H1 (cell line): ENCODE measurements at regions of chr1 and their contacts with region 1.

Region 1: DNA sequence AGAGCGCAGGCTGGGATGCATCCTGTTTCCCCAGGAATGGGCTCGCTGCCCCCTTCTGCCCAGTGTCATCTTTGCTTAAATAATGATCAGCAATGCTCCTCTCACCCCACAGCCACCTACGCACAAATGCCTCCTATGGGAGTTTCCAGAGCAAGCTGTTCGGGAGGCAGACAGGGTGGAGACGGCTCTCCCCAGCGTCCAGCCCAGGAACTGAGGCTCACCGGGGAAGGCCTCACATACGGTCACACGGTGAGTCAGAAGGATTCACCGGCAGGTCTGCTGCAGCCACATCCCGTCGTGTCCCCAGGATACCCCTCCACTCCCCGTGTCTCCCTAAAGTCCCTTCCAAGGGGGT is 40.3 kb upstream of the RUNX3 start:
- DNase-seq: peak in 1 of 2 experiments; percentile 23
- H3K4me3 ChIP-seq: no peak overlapping the region
- H3K27ac ChIP-seq: no peak overlapping the region
- H3K4me1 ChIP-seq: peaks cover 0 to 24% (median 11%) of the 10 kb centered on the region in 4 experiments; a peak in 6 of 7 replicates
- H3K27me3 ChIP-seq: no peaks in the 10 kb centered on the region; a peak in 1 of 7 replicates
- CTCF ChIP-seq: peak in 1 of 3 experiments; percentile 0; a peak in 1 of 4 replicates
- EP300 ChIP-seq: no peak
- POLR2A ChIP-seq: no peak
- RAD21 ChIP-seq: no peak; a peak in 1 of 4 replicates

Region 2: DNA sequence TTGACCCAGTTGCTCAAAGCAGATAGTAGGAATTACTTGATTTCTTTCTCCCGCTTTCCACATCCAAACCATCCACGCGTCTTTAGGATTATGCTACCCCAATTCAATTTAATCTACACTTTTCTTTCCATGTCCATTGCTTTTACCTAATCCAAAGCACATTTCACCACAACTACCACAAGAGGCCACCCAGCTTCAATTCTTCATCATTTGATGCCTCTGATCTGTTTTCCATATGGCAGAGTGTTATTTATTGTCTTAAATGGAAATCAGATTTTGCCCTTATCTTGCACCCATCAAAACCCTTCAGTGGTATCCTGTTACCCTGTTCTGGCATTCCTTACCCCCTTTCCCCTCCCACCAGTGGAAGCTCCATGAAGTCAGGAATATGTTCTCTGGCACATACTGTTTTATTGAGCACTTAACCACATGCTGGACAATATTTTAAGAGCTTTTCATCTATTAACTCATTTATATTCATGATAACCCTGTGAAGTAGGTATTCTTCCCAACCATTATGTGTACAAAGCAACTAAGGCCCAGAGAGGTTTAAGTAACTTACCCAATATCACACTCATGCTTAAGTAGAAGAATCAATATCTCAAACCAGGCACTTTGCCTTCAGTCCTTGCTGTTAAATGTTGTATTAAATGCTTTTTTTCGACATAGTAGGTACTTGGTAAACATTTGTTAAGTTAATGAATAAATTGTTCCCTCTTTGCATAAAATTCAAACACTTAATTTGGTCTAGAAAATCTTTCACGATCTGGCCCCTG is 190.5 kb before region 1 on chr1:
- CTCF ChIA-PET with region 1: no interaction called
- POLR2A ChIA-PET with region 1: no interaction called
- DNase-seq: no peak
- H3K4me3 ChIP-seq: no peak overlapping the region
- H3K27ac ChIP-seq: no peak overlapping the region
- H3K4me1 ChIP-seq: peaks cover 0 to 2% (median 0%) of the 10 kb centered on the region in 4 experiments; a peak in 1 of 7 replicates
- H3K27me3 ChIP-seq: no peaks in the 10 kb centered on the region
- CTCF ChIP-seq: no peak
- EP300 ChIP-seq: no peak
- POLR2A ChIP-seq: 0 out of 3 replicates have a peak, but pooled peaks of 1 of the 2 experiments have one; percentile 20
- RAD21 ChIP-seq: no peak

Region 3: GRCh38 chr1:24981631-24982005 is 11.2 kb after region 1 on chr1:
- CTCF ChIA-PET with region 1: interaction called, 24 read pairs
- POLR2A ChIA-PET with region 1: interaction called, 4 read pairs
- DNase-seq: no peak
- H3K4me3 ChIP-seq: no peak overlapping the region
- H3K27ac ChIP-seq: no peak overlapping the region
- H3K4me1 ChIP-seq: no peaks in the 10 kb centered on the region
- H3K27me3 ChIP-seq: no peaks in the 10 kb centered on the region
- CTCF ChIP-seq: no peak
- EP300 ChIP-seq: no peak
- POLR2A ChIP-seq: no peak
- RAD21 ChIP-seq: no peak

Region 4: GRCh38 chr1:24990779-24991641 is 20.6 kb after region 1 on chr1:
- CTCF ChIA-PET with region 1: interaction called, 12 read pairs
- POLR2A ChIA-PET with region 1: interaction called, 4 read pairs
- DNase-seq: no peak
- H3K4me3 ChIP-seq: no peak overlapping the region
- H3K27ac ChIP-seq: no peak overlapping the region
- H3K4me1 ChIP-seq: 0 out of 7 replicates have a peak, but pooled peaks cover 0 to 2% (median 0%) of the 10 kb centered on the region in 4 experiments
- H3K27me3 ChIP-seq: no peaks in the 10 kb centered on the region
- CTCF ChIP-seq: peak; percentile 29 to 47 (median 39)
- EP300 ChIP-seq: no peak
- POLR2A ChIP-seq: no peak
- RAD21 ChIP-seq: peak; percentile 48 to 63